WTC11 (cell line): ENCODE measurements at regions of chr19 and their contacts with region 1.

Region 1: DNA sequence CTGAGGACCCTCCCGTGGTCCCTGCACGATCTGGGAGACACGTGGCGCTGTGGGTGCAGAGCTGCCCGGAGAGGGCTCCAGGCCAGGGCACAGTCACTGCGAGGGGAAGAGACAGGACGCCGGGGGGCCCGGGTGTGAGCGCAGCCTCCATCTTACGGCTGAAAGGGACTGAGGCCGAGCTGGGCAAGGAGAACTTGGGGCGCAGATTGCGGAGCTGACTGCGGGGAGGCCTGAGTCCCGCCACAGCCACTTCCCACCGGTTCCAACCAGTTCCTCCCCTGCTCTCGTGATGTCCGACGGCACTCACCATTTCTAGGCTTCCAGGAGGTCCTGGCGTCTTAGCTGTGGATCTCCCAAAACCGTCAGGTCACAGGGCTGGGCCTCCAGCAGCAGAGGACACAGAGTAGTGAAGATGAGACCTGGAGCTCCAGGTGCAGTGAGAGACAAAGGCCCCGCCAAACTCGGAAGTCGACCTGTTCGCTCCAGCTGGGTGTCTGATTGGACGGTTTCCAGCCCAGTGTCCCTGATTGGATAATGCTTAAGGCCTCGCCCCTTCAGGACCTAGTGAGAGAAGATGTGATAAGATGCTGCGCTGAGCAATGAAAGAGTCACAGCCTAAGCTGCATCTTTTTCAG is 4.8 kb upstream of the ZNF253 start:
- DNase-seq: peak; percentile 88
- ATAC-seq: peak; percentile 87
- H3K4me3 Mint-ChIP-seq: peak overlapping the region; percentile 96
- H3K27ac Mint-ChIP-seq: peak overlapping the region; percentile 99
- H3K4me1 Mint-ChIP-seq: peaks cover 24% of the 10 kb centered on the region
- H3K27me3 Mint-ChIP-seq: no peaks in the 10 kb centered on the region; the same call in 1 of the 2 replicates
- CTCF ChIP-seq: no peak

Region 2: DNA sequence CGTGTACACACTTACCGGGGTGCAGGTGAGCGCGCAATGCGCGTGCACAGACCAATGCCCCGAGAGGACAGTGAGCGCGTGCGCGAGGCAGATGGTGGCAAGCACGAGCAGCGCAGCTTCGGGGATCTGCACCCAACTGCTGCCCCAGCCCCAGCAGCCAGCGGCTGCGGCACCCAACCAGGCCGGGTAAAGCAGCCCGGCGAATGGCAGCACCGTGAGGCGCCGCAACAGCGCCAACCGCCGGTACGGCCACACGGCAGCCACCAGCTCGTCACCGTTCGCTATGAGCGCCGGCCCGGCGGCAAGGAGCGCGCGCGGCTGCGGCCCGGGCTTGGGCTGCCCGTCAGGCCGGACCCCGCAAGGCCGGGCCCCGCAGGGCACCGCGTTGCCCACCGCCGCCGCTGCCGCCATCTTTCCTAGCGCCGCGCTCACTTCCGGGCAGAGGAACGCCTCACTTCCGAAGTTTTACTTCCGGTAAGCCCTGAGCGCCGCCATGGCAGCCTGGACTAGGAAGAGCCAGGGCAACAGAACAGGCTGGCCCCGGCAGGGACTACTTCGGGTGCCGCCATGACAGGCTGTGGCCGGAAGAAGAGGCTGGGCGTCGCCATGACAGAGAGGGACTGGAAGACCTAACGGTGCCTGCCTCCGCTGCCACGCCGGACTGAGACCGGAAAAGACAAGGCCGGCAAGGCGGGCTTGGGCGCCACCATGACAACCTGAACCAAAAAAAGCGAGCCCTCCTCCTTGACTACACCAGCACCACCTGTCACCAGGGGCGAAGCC is 197.4 kb before region 1 on chr19 and contains the start of gene ATP13A1:
- CTCF ChIA-PET with region 1: no interaction called
- POLR2A ChIA-PET with region 1: interaction called, 17 read pairs
- DNase-seq: peak; percentile 88
- ATAC-seq: peak; percentile 77
- H3K4me3 Mint-ChIP-seq: peak within 1 kb of the TSS; percentile 94
- H3K27ac Mint-ChIP-seq: peak within 1 kb of the TSS; percentile 97
- H3K4me1 Mint-ChIP-seq: peaks cover 23% of the 10 kb centered on the region
- H3K27me3 Mint-ChIP-seq: no peaks in the 10 kb centered on the region; the same call in 1 of the 2 replicates
- CTCF ChIP-seq: no peak
- total RNA-seq, gene ATP13A1: 63.4 to 82.6 TPM (median 64.3 TPM) in 3 replicates

Region 3: DNA sequence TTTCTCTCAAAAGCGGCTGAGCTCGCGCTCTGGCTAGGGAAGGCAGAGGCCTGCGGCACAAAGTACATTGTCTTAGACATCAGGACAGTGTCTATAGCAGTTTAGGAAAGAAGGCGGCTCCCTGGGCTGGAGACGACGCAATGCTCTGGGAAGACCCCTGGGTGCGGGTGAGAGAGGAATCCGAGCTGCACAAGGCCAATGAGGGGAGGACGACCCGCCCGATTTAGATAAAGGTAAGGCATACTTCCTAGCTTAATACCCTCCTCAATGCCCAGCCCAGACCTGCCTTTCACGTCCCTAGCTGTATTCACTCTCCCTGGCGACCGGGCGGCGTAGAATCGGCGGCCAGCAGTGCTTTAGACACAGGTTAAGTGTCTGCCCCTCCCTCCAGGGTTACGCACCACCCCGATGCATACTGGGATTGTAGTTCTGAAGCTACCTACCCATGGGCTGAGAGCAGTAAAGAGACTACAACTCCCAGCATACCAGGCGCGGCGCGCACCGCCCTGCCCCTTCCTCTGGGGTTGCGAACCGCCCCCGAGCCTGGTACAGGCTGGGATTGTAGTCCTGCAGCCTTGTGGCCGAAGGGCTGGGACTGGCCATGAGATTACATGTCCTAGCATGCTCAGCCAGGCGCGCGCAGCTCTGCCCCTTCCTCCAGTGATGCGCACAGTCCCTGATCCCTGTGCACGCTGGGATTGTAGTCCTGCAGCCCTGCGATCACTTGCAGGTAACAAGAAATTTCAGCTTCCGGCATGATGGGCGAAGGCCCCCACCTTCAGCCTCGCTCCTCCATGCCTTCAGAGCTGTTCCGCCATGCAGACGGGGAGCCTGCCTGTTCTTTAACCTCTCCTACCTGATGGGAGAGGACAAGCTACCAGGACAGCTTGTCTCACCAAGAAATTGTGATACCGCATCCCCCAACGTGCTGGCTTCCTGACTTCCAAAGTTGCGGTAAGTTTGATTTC is 84.5 kb before region 1 on chr19:
- CTCF ChIA-PET with region 1: interaction called, 5 read pairs
- POLR2A ChIA-PET with region 1: interaction called, 22 read pairs
- DNase-seq: peak; percentile 99
- ATAC-seq: peak; percentile 96
- H3K4me3 Mint-ChIP-seq: peak overlapping the region; percentile 98
- H3K27ac Mint-ChIP-seq: peak overlapping the region; percentile 95
- H3K4me1 Mint-ChIP-seq: peaks cover 25% of the 10 kb centered on the region
- H3K27me3 Mint-ChIP-seq: no peaks in the 10 kb centered on the region
- CTCF ChIP-seq: no peak

Region 4: DNA sequence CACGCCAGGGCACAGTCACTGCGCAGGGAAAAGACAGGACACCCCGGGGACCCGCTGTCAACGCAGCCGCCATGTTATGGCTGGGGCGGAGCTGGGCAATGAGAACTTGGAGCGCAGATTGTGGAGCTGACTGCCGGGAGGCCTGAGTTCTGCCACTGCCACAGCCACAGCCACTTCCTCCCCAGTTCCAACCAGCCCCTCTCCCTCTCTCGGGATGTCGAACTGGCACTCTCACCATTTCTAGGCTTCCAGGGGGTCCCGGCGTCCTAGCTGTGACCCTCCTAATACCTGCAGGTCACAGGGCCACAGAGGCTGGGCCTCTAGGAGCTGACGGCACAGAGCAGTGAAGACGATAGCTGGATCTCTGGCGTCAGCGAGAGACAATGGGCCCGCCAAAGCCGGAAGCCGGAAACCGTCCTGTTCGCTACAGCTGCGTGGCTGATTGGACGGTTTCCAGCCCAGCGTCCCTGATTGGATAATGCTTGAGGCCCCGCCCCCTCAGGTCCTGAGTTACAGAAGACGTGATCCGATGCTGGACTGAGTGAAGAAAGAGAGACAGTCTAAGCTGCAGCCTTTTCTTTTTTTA is 39.4 kb before region 1 on chr19 and contains the start of gene ZNF506:
- CTCF ChIA-PET with region 1: interaction called, 7 read pairs
- POLR2A ChIA-PET with region 1: interaction called, 32 read pairs
- DNase-seq: peak; percentile 97
- ATAC-seq: peak; percentile 97
- H3K4me3 Mint-ChIP-seq: peak within 1 kb of the TSS; percentile 100
- H3K27ac Mint-ChIP-seq: peak within 1 kb of the TSS; percentile 97
- H3K4me1 Mint-ChIP-seq: no peaks in the 10 kb centered on the region
- H3K27me3 Mint-ChIP-seq: peaks cover 10% of the 10 kb centered on the region
- CTCF ChIP-seq: no peak
- total RNA-seq, gene ZNF506: 15.7 to 20.8 TPM (median 17.9 TPM) in 3 replicates

Region 5: DNA sequence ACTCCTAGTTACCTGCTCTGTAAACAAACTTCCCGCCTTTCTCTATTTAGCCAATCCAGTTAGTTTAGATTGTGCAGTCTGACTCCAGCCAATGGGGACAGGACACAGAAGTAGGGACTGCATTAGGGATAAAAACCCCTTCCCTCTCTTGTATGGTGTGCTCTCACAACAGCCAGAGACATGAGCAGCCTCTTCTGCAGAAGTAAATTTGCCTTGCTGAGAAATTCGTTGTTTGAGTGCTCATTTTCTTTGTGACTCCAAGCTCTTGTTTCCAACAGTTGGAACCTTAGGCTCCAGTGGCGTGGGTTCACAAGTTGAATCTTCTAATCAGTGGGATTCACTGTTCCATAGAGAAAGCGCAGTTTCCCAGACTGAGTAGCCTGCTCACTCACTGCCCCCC is 106.0 kb after region 1 on chr19:
- CTCF ChIA-PET with region 1: no interaction called
- POLR2A ChIA-PET with region 1: no interaction called
- DNase-seq: no peak
- ATAC-seq: no peak
- H3K4me3 Mint-ChIP-seq: no peak overlapping the region
- H3K27ac Mint-ChIP-seq: no peak overlapping the region
- H3K4me1 Mint-ChIP-seq: peaks cover 6% of the 10 kb centered on the region
- H3K27me3 Mint-ChIP-seq: peaks cover 21% of the 10 kb centered on the region
- CTCF ChIP-seq: no peak

Region 6: GRCh38 chr19:20005766-20006165 is 144.9 kb after region 1 on chr19:
- CTCF ChIA-PET with region 1: no interaction called
- POLR2A ChIA-PET with region 1: no interaction called
- DNase-seq: no peak
- ATAC-seq: no peak
- H3K4me3 Mint-ChIP-seq: no peak overlapping the region
- H3K27ac Mint-ChIP-seq: no peak overlapping the region
- H3K4me1 Mint-ChIP-seq: no peaks in the 10 kb centered on the region
- H3K27me3 Mint-ChIP-seq: no peaks in the 10 kb centered on the region
- CTCF ChIP-seq: no peak

Region 7: DNA sequence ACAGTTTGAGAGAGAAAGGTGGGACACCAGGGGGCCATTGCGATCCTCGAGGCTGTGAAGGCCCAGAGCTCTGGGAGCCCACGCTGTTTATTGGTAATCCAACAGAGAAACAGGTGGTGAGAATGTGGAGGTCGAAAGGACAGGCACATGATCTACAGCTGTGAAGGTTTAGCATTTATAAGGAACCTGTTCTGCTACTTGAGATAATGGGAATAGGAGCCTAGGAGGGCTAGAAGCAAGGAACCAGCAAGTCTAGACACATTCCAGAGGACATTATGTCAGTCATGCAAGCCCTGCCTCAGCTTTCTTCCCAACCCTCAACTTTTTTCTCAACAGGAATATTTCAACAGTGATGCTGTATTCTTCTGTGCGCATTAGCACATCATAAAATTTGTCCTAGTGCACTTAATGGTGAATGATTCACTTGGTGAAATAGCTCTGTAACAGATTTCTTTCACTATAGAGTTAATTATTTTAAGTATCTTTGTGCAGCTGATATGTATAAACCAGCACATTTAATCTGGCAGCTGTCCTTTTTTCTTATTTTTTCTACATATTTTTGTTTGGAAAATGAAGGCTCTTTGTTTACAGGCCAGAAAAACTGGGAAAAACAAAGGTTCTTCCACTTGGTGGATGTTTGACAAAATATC is 242.3 kb after region 1 on chr19:
- CTCF ChIA-PET with region 1: no interaction called
- POLR2A ChIA-PET with region 1: no interaction called
- DNase-seq: no peak
- ATAC-seq: peak; percentile 20; the same call in 1 of the 2 replicates
- H3K4me3 Mint-ChIP-seq: no peak overlapping the region
- H3K27ac Mint-ChIP-seq: peak overlapping the region; percentile 80
- H3K4me1 Mint-ChIP-seq: peaks cover 79% of the 10 kb centered on the region
- H3K27me3 Mint-ChIP-seq: no peaks in the 10 kb centered on the region
- CTCF ChIP-seq: no peak